Activated CD4-positive, alpha-beta memory T cell treated with anti-CD3 and anti-CD28 coated beads, Interleukin-2, amount 10 ng/mL, durations not matched to agents 7 days and 5 days (primary cell): ENCODE measurements at regions of chr9 and their contacts with region 1.

Region 1: GRCh38 chr9:128127990-128128835 is 684 bp upstream of the PTGES2 start:
- DNase-seq: peak; percentile 86
- H3K4me3 Mint-ChIP-seq: peak overlapping the region; percentile 91
- H3K27ac Mint-ChIP-seq: peak overlapping the region; percentile 96
- H3K4me1 Mint-ChIP-seq: peaks cover 36% of the 10 kb centered on the region
- H3K27me3 Mint-ChIP-seq: peaks cover 20% of the 10 kb centered on the region

Region 2: DNA sequence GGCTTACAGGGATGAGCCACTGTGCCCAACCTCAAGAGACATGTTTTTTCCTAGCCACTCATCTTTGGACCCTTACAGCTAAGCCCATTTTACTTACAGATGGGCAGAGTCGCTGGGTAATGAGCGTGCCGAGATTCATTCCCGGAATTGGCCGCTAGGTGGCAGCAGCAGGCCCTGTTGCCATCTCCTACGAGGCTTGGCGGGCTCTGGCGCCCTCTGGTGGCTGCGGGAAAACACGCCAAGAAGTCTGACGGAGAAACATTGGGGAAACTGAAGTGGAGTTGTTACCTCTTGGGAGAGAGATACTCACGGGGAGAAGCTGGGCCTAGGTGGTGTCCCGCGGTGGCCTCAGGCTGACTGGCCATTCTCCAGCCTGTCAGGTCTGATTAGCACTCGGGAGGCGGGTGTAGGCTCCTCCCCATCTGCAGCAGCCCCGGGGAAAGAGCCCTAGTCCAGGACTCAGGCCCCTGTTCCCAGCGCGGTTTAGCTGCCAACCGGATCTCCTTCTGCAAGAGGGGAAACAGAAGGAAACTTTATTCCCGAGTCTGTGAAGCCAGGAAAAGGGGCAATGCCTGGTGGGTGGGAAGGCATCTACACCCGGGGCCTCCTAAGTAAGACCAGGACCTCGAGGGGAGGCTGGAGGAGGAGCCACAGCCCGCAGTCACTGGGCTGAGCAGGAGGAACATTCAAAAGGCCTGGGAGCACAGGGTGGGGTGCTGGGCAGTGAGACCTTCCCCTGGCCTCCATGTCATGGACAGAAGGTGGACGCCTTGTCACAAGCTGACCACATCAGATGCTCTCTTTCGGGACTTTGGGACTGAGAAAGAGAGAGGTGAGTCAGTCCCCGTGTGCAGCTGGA is 10.4 kb before region 1 on chr9:
- CTCF ChIA-PET with region 1: interaction called, 22 read pairs
- POLR2A ChIA-PET with region 1: interaction called, 4 read pairs
- DNase-seq: peak; percentile 96
- H3K4me3 Mint-ChIP-seq: no peak overlapping the region
- H3K27ac Mint-ChIP-seq: no peak overlapping the region
- H3K4me1 Mint-ChIP-seq: peaks cover 6% of the 10 kb centered on the region
- H3K27me3 Mint-ChIP-seq: no peaks in the 10 kb centered on the region

Region 3: DNA sequence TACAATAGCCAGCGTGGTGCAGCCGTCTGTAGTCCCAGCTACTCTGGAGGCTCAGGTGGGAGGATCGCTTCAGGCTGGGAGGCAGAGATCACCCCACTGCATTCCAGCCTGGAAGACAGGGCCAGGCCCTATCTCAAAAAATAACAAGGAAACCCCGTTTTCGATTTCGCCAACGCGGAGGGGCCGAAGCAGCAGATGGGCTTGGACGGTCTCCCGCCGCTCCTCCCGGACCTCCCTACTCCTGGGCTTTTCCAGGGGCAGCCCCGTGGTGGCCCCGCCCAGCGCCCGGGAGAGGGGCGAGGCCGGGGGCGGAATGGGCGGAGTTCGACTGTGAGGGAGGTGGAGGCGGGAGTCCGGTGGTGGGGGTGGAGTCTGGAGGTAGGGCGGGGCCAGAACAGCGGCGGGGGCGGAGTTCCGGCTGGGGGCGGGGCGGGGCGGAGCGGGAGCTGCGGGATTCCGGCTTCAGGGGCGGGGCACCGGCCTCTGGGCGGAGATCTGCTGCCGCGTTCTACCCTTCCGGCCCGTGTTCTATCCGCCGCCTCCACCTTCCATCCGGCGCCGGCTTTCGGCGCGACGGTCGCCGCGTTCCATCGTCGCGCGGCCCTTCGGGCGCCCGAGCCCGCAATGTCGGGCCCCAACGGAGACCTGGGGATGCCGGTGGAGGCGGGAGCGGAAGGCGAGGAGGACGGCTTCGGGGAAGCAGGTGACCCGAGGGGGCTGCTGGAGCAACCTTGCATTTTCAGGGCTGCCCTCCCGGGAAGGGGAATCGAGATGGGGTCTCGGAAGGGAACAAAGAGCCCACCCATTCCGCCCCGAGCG is 31.8 kb after region 1 on chr9 and contains the start of gene BBLN:
- CTCF ChIA-PET with region 1: interaction called, 3 read pairs
- POLR2A ChIA-PET with region 1: interaction called, 19 read pairs
- DNase-seq: peak; percentile 95
- H3K4me3 Mint-ChIP-seq: peak within 1 kb of the TSS; percentile 78
- H3K27ac Mint-ChIP-seq: peak within 1 kb of the TSS; percentile 80
- H3K4me1 Mint-ChIP-seq: peaks cover 23% of the 10 kb centered on the region
- H3K27me3 Mint-ChIP-seq: no peaks in the 10 kb centered on the region
- total RNA-seq, gene BBLN: 91.3 to 94.1 TPM

Region 4: DNA sequence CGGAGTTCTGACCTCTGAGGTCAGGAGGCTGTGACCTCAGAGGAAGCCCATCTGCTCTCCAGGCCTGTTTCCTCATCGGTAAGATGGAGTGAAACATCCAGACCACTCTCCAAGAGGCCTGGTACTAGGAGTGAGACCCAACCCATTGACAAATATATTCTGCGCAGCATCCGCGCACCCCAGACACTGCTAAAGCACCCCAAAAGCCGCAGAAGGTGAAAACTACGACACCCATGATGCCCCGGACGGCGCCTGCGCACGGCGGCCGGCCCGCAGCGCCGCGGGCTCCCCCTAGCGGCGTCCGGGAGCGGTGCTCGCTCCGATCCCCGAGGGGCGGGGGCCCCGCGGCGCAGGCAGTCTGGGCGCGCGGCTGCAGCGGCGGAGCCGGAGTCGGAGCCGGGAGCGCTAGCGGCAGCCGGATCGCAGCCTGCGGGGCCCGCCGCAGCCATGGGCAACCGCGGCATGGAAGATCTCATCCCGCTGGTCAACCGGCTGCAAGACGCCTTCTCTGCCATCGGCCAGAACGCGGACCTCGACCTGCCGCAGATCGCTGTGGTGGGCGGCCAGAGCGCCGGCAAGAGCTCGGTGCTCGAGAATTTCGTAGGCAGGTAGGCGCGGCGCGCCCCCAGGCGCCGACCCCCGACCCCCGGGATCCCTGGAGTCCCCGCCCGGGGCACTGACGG is 75.0 kb after region 1 on chr9 and contains the start of gene DNM1:
- CTCF ChIA-PET with region 1: no interaction called
- POLR2A ChIA-PET with region 1: no interaction called
- DNase-seq: peak; percentile 77
- H3K4me3 Mint-ChIP-seq: peak within 1 kb of the TSS; percentile 46
- H3K27ac Mint-ChIP-seq: peak within 1 kb of the TSS; percentile 37
- H3K4me1 Mint-ChIP-seq: peaks cover 12% of the 10 kb centered on the region
- H3K27me3 Mint-ChIP-seq: peaks cover 30% of the 10 kb centered on the region
- total RNA-seq, gene DNM1: 0.30 to 0.40 TPM